ENCODE measurements at regions of chr12 and their contacts with region 1.

Region 1: GRCh38 chr12:123126186-123127006 is 24.5 kb downstream of the PITPNM2 start:
- DNase-seq: peak in 2 of 3 donors; percentile 73 to 76
- H3K4me3 ChIP-seq: no peak overlapping the region
- H3K27ac ChIP-seq: no peak overlapping the region
- H3K4me1 ChIP-seq: peaks cover 0 to 13% (median 11%) of the 10 kb centered on the region in 4 experiments
- H3K27me3 ChIP-seq: no peaks in the 10 kb centered on the region

Region 2: GRCh38 chr12:122999196-122999950 is 127.0 kb before region 1 on chr12:
- CTCF ChIA-PET with region 1: no interaction called
- POLR2A ChIA-PET with region 1: no interaction called
- DNase-seq: no peak
- H3K4me3 ChIP-seq: no peak overlapping the region
- H3K27ac ChIP-seq: no peak overlapping the region
- H3K4me1 ChIP-seq: peaks cover 0 to 4% (median under 1%) of the 10 kb centered on the region in 4 experiments
- H3K27me3 ChIP-seq: no peaks in the 10 kb centered on the region

Region 3: DNA sequence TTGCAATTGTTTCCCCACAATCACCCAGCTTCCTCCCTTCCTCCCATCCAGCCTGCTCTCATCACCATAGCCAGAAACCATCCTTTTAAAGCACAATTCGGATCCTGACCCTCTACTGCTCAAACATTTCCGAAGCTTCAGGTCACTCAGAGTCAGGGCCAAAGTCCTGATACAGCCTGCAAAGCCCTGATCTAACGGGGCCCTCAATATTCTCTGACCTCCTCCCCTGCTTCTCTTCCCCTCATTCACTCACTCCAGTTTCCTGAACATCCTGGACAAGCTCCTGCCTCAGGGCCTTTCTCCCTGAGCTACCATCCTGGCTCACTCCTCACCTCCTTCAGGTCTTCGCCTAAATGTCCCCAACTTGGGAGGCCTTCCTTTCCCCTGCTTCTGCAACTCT is 21.6 kb before region 1 on chr12:
- CTCF ChIA-PET with region 1: no interaction called
- POLR2A ChIA-PET with region 1: no interaction called
- DNase-seq: no peak
- H3K4me3 ChIP-seq: no peak overlapping the region
- H3K27ac ChIP-seq: no peak overlapping the region
- H3K4me1 ChIP-seq: peaks cover 3 to 23% (median 20%) of the 10 kb centered on the region in 4 experiments
- H3K27me3 ChIP-seq: no peaks in the 10 kb centered on the region

Region 4: GRCh38 chr12:123115409-123116121 is 10.8 kb before region 1 on chr12:
- CTCF ChIA-PET with region 1: interaction called, 10 read pairs
- POLR2A ChIA-PET with region 1: no interaction called
- DNase-seq: peak in 2 of 3 donors; percentile 26 to 49
- H3K4me3 ChIP-seq: no peak overlapping the region
- H3K27ac ChIP-seq: no peak overlapping the region
- H3K4me1 ChIP-seq: peaks cover 0 to 3% (median 0%) of the 10 kb centered on the region in 4 experiments
- H3K27me3 ChIP-seq: no peaks in the 10 kb centered on the region

Region 5: DNA sequence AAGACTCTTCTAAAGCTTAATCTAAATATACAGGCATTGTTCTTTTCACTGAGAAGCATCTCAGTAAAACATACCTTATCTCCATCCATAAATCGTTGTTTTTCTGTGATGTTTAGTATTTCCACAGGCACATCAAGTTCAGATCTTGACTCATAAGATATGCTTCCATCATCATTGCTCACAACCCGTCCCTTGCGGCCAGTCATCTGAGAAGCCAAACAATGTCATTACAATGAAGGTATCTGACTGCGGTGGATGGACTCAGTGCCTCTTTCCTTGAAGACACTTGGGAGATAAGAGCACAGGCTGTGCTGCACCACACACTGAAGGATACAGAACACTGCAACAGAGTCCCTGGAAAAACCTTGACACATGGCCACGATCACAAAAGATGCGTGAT is 193.4 kb after region 1 on chr12:
- CTCF ChIA-PET with region 1: no interaction called
- POLR2A ChIA-PET with region 1: no interaction called
- DNase-seq: no peak
- H3K4me3 ChIP-seq: no peak overlapping the region
- H3K27ac ChIP-seq: no peak overlapping the region
- H3K4me1 ChIP-seq: no peaks in the 10 kb centered on the region
- H3K27me3 ChIP-seq: no peaks in the 10 kb centered on the region

Measured in common myeloid progenitor, CD34-positive (primary cell).